ENCODE measurements at regions of chr16 and their contacts with region 1.

Region 1: GRCh38 chr16:72455743-72456659 is 284.0 kb upstream of the PMFBP1 start:
- DNase-seq: peak; percentile 61
- H3K4me3 ChIP-seq: no peak overlapping the region
- H3K27ac ChIP-seq: no peak overlapping the region
- H3K4me1 ChIP-seq: peaks cover 0 to 3% (median 0%) of the 10 kb centered on the region in 4 donors
- H3K27me3 ChIP-seq: no peaks in the 10 kb centered on the region
- CTCF ChIP-seq: no peak
- EP300 ChIP-seq: no peak
- POLR2A ChIP-seq: no peak

Region 2: GRCh38 chr16:73503093-73503492 is 1047.1 kb after region 1 on chr16:
- in situ Hi-C with region 1: no loop called
- intact Hi-C with region 1: loop called (anchors 2 kb)
- DNase-seq: no peak
- H3K4me3 ChIP-seq: no peak overlapping the region
- H3K27ac ChIP-seq: no peak overlapping the region
- H3K4me1 ChIP-seq: no peaks in the 10 kb centered on the region
- H3K27me3 ChIP-seq: no peaks in the 10 kb centered on the region
- CTCF ChIP-seq: no peak
- EP300 ChIP-seq: no peak
- POLR2A ChIP-seq: no peak